ENCODE measurements at regions of chr17 and their contacts with region 1.

Region 1: DNA sequence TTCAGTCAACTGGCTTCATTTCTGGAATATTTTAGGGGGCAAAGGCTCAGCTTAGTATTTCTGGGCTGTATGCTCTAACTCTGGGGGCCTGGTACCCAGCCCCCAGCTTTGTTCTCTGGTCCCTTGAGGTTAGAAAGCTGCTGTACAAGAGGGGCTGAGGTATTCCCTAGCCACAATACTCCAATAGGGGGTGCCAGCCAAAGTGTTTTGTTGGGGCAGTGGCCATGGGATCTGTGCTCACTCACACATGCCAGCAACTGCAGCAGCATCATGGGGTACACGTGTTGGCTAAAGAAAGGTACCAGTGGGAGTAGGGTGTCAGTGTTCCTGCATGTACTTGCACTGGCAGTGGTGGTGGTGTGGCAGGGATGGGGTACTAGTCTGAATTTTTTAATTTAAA is 257.3 kb downstream of the CA10 start:
- DNase-seq: no peak
- ATAC-seq: no peak
- H3K4me3 ChIP-seq: no peak overlapping the region
- H3K27ac ChIP-seq: no peak overlapping the region
- H3K4me1 ChIP-seq: no peaks in the 10 kb centered on the region
- H3K27me3 ChIP-seq: no peaks in the 10 kb centered on the region
- CTCF ChIP-seq: no peak
- POLR2A ChIP-seq: no peak

Region 2: GRCh38 chr17:51764387-51764972 is 136.8 kb before region 1 on chr17:
- intact Hi-C with region 1: no loop called
- DNase-seq: peak in 3 of 5 donors; percentile 18 to 35 (median 22)
- ATAC-seq: peak in 3 of 4 donors; percentile 70 to 90 (median 72)
- H3K4me3 ChIP-seq: no peak overlapping the region
- H3K27ac ChIP-seq: no peak overlapping the region
- H3K4me1 ChIP-seq: no peaks in the 10 kb centered on the region
- H3K27me3 ChIP-seq: peaks cover 0 to 31% (median 3%) of the 10 kb centered on the region in 9 donors
- CTCF ChIP-seq: peak; percentile 66 to 87 (median 78)
- POLR2A ChIP-seq: no peak

Region 3: GRCh38 chr17:51914577-51914976 is 13.3 kb after region 1 on chr17:
- intact Hi-C with region 1: loop called in 1 of 10 experiments (anchors 2 kb)
- DNase-seq: no peak
- ATAC-seq: no peak
- H3K4me3 ChIP-seq: no peak overlapping the region
- H3K27ac ChIP-seq: no peak overlapping the region
- H3K4me1 ChIP-seq: no peaks in the 10 kb centered on the region
- H3K27me3 ChIP-seq: peaks cover 0 to 5% (median 0%) of the 10 kb centered on the region in 9 donors
- CTCF ChIP-seq: no peak
- POLR2A ChIP-seq: no peak

Region 4: GRCh38 chr17:51951741-51952140 is 50.5 kb after region 1 on chr17:
- intact Hi-C with region 1: loop called in 2 of 10 experiments (anchors 5 to 10 kb)
- DNase-seq: no peak
- ATAC-seq: no peak
- H3K4me3 ChIP-seq: no peak overlapping the region
- H3K27ac ChIP-seq: no peak overlapping the region
- H3K4me1 ChIP-seq: no peaks in the 10 kb centered on the region
- H3K27me3 ChIP-seq: no peaks in the 10 kb centered on the region
- CTCF ChIP-seq: no peak
- POLR2A ChIP-seq: no peak

Measured in heart left ventricle (tissue), 16 donors.